Head of caudate nucleus (tissue), 42 donors: ENCODE measurements at regions of chr15 and their contacts with region 1.

Region 1: DNA sequence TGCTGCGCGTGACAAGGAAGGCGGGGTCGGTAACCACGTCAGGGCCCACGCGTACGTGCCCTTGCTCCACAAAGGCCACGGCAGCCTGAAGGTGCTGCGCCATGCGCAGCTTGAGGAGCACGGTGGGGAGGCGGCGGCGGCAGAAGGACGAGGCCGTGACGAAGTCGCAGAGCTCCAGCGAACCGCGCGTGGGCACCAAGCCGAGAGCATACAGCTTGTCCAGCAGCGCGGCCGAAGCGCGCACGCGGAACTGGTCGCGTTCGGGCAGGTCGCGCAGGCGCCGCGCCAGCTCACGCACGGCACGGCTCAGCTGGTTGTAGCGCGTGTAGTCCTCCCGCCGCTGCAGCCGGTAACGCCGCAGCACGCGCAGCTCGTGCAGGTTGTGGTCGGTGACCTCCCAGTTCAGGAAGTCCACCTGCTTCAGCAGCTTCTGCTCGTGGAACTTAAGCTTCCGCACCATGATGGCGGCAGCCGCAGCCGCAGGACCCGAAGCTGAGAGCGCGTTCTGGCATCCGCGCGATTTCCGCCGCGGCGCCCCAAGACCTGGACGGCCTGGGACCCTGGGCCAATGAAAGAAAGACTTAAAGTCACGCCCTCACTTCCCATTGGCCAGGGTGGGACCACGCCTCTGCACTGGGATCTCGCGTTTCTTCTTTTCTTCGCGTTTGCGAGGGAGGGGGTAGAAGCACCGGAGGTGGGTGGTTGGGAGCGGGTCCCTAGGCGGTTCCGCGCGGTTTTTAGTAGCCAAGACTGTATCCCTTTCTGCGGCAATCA is at the start of gene IMP3:
- DNase-seq: peak; percentile 93 to 99 (median 97)

Region 2: DNA sequence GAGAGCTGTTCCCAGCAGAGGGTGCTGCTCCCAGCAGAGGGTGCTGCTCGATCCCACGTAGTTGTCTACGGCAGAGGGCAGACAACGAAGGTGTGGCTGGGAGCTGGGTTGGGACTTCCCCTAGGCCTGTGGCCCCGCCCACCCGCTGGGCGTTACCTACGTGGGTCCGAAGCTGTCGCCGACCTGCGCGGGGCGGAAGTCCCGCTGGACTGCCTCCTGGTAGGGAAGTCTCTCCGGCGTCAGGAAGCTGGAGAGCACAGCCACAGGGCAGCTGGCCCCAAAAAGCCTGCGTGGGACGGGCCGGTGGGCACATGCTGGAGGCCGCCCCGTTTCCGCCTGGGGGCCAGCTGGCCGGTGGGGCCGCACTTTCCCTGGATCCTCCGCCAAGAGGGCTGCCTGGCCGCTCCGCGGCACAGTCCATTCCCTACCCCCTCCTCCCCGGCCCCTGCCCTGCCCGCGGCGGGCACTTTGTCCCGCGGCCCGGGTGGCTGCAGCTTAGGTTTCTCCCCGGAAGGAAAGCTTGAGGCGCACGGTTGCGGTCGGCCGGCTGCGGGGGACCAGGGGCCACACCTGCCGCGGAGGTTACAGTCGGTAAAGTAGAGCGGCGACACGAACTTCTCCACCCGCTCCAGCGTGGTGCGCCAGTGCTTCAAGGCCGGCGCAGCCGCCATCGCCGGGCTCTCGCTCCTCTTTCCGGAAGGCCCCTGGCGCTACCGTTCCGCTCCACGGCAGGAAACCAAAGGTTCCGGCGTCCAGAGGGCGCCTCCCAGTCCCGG is 271.8 kb before region 1 on chr15 and contains the start of gene MAN2C1:
- intact Hi-C with region 1: loop called (anchors 10 kb)
- DNase-seq: peak; percentile 82 to 97 (median 92)

Region 3: DNA sequence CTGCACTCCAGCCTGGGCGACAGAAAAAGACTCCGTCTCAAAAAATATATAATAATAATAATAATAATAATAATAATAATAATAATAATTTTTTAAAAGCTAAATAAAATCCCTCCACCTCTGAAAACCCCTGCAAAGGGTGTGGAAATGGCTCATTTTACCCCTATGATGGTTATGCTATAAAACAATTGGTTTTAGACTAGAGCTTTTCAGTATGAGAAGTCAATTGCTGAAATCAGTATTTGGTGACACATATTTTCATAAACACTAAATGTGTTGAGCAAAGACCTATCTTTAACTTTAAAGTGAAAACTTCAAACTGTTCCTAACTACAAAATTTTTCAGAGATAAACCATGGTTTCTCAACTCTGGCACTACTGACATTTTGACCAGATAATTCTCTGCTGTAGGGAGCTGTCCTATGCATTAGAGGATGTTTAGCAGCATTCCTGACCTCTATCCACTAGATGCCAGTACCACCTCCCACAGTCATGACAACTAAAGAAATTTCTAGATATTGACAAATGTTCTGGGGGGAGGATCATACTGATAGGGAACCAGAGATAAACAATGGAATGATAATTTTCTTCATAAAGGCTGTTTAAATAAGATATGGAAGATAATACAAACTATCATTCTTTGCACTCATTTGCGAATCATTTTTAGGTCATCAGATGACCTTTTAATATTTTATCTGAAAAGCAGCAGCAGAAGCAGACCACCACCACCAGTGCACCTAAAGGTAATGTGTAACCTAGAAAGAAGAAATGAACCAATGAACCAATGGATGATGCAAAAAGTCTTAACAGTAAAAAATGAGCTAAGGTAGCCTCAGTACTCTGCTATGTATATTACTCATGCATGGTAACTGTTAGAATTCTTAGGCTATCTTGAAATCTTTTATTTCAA is 74.6 kb before region 1 on chr15:
- intact Hi-C with region 1: no loop called
- DNase-seq: no peak

Region 4: DNA sequence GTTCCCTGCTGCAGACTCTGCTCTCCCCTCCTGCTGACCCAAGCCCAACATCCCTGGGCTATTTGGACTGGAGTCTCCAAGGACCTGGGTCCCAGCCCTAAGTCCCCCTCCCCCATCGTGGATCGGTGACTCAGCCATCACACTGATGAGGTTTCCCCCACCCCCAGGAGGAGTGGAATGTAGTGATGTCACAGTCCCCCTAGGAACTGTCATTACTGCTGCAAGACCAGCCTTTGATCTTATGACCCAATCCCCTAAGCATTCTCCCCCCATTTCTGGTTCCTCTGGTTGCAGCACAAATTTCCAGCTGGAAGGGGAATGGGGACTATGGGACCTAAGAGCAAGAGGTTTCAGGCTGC is 136.1 kb after region 1 on chr15:
- intact Hi-C with region 1: no loop called
- DNase-seq: peak in 1 of 42 donors; percentile 20